ENCODE measurements at regions of chr3 and their contacts with region 1.

Region 1: GRCh38 chr3:88936831-88937230 is 170.6 kb upstream of the EPHA3 start:
- DNase-seq: no peak
- H3K4me3 ChIP-seq: no peak overlapping the region
- H3K27ac ChIP-seq: no peak overlapping the region
- H3K4me1 ChIP-seq: no peaks in the 10 kb centered on the region
- H3K27me3 ChIP-seq: no peaks in the 10 kb centered on the region
- CTCF ChIP-seq: no peak
- EP300 ChIP-seq: no peak
- POLR2A ChIP-seq: no peak

Region 2: DNA sequence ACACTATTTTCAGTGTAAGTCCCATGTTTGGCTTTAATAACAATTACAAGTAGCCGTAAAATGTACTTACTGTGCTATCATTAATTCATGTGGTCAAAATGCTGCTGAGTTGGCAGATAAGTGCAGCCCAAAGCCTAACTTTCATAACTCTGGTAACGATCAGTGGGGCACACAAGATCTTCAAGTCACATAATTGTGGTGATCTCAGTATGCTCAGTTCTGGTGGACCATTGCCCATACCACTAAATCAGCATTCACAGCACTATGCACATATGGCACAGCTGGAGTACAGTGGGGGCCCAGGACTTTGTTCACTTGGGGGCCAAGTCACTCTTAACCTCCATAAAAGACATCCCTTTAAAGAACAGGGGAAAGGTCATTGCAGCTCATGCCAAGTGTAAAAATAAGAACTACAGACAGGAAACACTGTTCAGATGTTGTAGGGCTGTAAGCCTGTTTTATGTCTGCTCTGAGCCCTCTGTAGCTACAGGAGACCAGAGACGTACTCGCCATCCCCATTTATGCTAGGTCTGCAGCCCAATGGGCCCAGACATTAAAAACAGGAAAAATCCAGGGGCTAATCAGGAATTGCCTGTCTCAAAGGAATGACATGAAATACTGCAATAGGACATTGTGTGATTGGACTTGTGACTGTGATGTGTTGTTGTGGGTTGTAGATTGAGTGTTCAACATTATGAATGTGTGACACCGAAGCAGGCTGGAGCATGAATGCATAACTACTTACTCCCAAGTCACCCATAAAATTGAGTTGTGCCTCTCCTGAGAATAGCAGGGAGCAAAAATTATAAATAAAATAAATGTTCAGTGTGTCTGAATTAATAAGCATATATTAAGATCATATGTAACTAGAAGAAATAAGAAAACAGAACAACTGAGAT is 111.9 kb before region 1 on chr3:
- intact Hi-C with region 1: no loop called
- DNase-seq: no peak
- H3K4me3 ChIP-seq: no peak overlapping the region
- H3K27ac ChIP-seq: no peak overlapping the region
- H3K4me1 ChIP-seq: no peaks in the 10 kb centered on the region
- H3K27me3 ChIP-seq: no peaks in the 10 kb centered on the region
- CTCF ChIP-seq: no peak
- EP300 ChIP-seq: no peak
- POLR2A ChIP-seq: no peak

Region 3: DNA sequence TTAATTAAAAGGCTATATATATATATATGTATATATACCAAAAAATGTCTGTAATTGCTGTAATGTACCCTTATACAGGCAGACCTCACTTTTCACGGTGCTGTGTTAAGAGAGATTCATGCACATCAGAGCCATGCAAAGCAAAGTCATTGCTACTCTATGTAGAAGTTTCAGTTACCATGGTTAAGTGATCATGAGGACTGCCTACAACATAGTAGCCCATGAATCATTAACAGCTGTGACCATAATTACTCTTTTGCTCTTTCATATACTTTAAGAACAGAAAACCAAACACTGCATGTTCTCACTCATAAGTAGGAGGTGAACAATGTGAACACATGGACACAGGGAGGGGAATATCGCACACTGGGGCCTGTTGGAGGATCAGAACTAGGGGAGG is 54.7 kb before region 1 on chr3:
- intact Hi-C with region 1: no loop called
- DNase-seq: no peak
- H3K4me3 ChIP-seq: no peak overlapping the region
- H3K27ac ChIP-seq: no peak overlapping the region
- H3K4me1 ChIP-seq: no peaks in the 10 kb centered on the region
- H3K27me3 ChIP-seq: no peaks in the 10 kb centered on the region
- CTCF ChIP-seq: no peak
- EP300 ChIP-seq: no peak
- POLR2A ChIP-seq: no peak

Region 4: GRCh38 chr3:88912294-88912877 is 24.4 kb before region 1 on chr3:
- intact Hi-C with region 1: loop called in 1 of 4 experiments (anchors 2 kb)
- DNase-seq: no peak
- H3K4me3 ChIP-seq: no peak overlapping the region
- H3K27ac ChIP-seq: no peak overlapping the region
- H3K4me1 ChIP-seq: no peaks in the 10 kb centered on the region
- H3K27me3 ChIP-seq: no peaks in the 10 kb centered on the region
- CTCF ChIP-seq: no peak
- EP300 ChIP-seq: no peak
- POLR2A ChIP-seq: no peak

Region 5: DNA sequence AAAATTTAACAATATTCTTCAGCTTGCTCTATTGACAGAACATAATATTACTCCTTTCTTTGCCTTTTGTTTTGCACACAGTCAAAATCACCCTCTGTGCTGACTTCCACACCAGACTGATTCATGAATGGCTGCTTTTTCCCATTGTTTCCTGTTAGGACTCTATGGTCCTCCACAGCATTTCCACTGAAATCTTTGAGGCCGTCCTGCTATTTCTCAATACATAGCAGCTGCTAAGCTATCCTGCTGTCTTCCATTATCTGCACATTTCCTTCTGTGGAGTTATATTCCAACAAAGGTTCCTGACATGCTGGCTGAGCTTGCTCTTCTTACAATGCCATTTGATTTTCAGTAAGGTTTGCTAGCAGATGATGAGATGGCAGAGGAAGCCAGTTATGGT is 323.9 kb after region 1 on chr3:
- intact Hi-C with region 1: no loop called
- DNase-seq: no peak
- H3K4me3 ChIP-seq: no peak overlapping the region
- H3K27ac ChIP-seq: no peak overlapping the region
- H3K4me1 ChIP-seq: no peaks in the 10 kb centered on the region
- H3K27me3 ChIP-seq: no peaks in the 10 kb centered on the region
- CTCF ChIP-seq: no peak
- EP300 ChIP-seq: no peak
- POLR2A ChIP-seq: no peak